Lower leg skin (tissue), 4 donors: ENCODE measurements at regions of chr18 and their contacts with region 1.

Region 1: DNA sequence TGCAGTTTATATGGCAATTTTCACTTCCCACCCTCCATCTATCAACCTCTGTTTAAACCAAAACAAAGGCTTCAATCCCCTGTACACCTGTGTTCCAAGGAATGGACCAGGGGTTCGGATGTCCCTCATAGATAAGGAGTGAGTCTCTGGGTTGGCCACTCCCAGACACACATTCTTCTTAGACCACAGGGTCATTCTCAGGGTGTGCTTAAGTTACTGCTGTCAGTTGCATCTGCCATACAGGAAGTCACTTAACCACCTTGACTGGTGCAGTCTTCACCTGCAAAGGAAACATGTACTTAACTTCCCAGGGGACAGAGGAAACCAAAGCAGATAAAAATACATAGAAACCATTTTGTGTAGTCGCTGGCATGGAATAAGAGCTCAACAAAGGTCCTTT is 151.0 kb upstream of the NDUFV2 start:
- DNase-seq: no peak
- H3K4me3 ChIP-seq: no peak overlapping the region
- CTCF ChIP-seq: no peak
- POLR2A ChIP-seq: no peak

Region 2: DNA sequence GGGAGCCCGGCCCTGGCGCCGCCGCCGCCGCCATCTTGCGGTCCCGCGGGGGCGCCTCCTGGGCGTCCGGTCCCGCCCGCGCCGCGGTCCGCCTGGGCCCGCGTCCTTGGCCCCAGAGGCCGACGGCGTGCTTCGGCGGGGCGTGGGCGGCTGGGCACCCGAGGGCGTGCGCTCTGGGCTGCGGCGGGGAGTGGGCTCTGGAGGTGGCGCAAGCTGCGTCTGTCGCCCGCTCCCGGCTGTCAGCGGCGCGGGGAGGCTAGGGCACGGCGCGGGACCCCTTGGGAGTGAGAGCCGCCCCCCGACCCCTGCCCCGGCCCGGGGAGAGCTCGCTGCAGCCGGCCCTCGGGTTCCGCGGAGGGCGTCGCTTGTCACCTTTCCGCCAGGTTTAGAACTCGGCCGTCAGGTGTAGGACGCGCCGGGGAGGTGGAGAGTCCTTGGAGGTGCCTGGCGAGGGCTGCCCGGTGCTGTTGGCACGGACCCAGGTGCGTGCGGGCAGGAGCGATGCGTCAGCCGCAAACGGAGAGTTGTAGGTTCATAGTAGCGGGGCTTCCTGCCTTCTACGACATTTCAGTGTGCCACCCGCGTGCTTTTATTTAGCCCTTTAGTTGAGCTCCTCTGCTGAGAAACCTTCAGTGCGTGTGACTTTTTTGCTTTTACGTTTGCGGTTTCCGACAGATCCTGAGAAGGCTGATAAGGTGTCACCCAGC is 963.2 kb after region 1 on chr18:
- intact Hi-C with region 1: loop called (anchors 5 kb)
- DNase-seq: peak; percentile 50 to 93
- H3K4me3 ChIP-seq: peak overlapping the region; percentile 100
- CTCF ChIP-seq: no peak
- POLR2A ChIP-seq: no peak